Activated T-helper 2 cell treated with anti-CD3 and anti-CD28 coated beads, Interferon-gamma antibody, Interleukin-2, Interleukin-4, amounts not matched to agents 10 μg/mL and 5 μg/mL and 100 μg/mL, durations not matched to agents 14 hours and 24 hours and 36 hours (primary cell): ENCODE measurements at regions of chr10 and their contacts with region 1.

Region 1: DNA sequence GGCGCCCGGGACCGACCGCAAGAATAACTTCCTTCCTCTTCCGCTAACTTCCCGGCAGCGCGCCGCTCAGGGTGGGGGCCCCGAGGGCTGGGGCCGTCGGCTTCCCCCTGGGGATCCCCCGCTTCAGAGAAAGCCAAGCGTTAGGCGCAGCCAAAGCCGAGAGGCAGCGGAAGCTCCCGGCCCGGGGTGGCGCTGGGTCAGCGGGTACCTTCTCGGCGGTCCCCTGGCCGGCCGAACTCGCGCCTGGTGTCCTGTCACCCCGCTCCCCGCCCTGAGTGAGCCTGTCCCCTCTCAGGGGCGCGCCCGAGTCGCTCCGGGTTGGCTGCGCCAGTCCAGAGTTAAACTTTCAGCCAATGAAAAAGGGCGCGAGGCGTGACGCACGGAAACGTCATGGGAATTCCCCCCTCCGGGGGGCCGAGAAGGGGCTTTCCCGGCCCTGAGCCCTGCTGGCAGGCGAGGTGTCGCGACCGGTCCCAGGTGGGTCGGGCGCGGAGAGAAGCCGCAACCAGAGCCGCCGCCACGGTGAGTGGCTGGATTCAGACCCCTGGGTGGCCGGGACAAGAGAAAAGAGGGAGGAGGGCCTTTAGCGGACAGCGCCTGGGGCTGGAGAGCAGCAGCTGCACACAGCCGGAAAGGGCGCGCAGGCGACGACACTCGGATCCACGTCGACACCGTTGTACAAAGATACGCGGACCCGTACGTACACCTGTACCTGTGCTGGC is 1.3 kb upstream of the NFKB2 start:
- DNase-seq: peak; percentile 99
- H3K4me3 Mint-ChIP-seq: peak overlapping the region; percentile 91
- H3K27ac Mint-ChIP-seq: peak overlapping the region; percentile 99
- H3K4me1 Mint-ChIP-seq: peaks cover 35% of the 10 kb centered on the region
- H3K27me3 Mint-ChIP-seq: no peaks in the 10 kb centered on the region

Region 2: DNA sequence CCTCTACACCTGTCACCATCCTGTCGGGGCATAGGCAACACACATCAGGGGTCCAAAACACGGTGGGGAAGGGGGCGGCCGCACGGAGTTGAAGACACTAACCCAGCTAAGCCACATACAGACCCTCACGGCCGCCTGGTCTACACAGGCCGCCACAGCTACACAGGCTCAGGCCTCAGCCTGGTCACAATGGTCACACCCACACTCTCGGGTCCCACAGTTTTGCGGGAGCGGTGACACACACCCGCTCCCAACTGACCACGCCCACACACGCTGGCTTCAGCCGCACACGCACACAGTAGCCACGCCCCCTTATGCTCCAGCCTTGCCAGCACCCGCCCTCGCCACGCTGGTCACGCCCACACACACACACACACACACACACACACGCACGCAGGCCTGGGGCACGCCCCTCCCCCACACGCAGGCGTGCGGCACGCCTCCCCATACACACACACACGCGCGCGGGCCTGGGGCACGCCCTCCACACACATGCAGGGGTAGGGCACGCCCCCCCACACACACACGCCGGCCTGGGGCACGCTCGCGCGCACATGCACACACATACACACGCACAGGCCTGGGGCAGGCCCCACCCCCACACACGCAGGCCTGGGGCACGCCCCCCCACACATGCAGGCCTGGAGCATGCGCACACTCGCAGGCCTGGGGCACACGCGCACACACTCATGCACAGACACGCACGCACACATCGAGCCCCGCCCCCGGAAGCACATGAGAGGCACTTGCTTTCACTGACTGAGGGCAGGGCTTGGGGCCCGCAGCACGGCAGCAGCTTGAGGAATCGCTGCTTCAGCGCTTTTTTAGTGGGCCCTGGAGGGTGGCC is 563.7 kb before region 1 on chr10:
- intact Hi-C with region 1: loop called (anchors 10 kb)
- DNase-seq: peak; percentile 88
- H3K4me3 Mint-ChIP-seq: peak overlapping the region; percentile 71
- H3K27ac Mint-ChIP-seq: peak overlapping the region; percentile 92
- H3K4me1 Mint-ChIP-seq: peaks cover 48% of the 10 kb centered on the region
- H3K27me3 Mint-ChIP-seq: no peaks in the 10 kb centered on the region

Region 3: DNA sequence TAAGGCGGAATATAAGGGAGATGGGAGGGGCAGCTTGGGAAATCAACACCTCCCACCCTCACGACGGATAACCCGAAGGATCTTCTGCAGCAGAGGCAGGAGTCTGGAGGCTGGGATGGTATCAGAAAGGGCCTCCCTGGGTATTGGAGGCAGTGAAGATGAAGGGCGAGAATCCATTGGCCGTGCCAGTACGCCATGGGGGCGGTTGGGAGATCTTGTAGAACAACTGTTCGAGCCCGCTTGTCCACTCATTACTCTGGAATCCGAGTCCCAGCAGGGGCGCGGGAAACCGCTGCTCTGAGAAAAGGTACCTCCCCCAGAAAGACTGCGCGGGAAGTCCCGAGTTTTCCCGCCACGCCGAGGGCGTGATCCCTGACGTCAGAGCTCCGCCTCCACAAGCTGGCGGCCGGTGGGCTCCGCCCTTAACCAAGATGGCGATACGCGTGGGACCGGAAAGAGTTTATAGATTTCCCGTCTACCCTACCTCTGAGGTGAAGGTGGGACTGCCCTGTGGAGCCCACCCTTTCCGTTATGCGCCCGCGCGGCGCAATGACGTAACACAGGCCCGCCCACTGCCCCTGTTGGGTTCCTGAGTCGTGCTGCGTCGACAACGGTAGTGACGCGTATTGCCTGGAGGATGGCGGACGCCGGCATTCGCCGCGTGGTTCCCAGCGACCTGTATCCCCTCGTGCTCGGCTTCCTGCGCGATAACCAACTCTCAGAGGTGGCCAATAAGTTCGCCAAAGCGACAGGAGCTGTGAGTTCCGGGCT is 242.3 kb before region 1 on chr10 and contains the start of gene NOLC1:
- intact Hi-C with region 1: loop called (anchors 1 kb)
- DNase-seq: peak; percentile 100
- H3K4me3 Mint-ChIP-seq: peak within 1 kb of the TSS; percentile 97
- H3K27ac Mint-ChIP-seq: peak within 1 kb of the TSS; percentile 96
- H3K4me1 Mint-ChIP-seq: peaks cover 28% of the 10 kb centered on the region
- H3K27me3 Mint-ChIP-seq: no peaks in the 10 kb centered on the region
- total RNA-seq, gene NOLC1: 195 and 196 TPM in 2 replicates

Region 4: DNA sequence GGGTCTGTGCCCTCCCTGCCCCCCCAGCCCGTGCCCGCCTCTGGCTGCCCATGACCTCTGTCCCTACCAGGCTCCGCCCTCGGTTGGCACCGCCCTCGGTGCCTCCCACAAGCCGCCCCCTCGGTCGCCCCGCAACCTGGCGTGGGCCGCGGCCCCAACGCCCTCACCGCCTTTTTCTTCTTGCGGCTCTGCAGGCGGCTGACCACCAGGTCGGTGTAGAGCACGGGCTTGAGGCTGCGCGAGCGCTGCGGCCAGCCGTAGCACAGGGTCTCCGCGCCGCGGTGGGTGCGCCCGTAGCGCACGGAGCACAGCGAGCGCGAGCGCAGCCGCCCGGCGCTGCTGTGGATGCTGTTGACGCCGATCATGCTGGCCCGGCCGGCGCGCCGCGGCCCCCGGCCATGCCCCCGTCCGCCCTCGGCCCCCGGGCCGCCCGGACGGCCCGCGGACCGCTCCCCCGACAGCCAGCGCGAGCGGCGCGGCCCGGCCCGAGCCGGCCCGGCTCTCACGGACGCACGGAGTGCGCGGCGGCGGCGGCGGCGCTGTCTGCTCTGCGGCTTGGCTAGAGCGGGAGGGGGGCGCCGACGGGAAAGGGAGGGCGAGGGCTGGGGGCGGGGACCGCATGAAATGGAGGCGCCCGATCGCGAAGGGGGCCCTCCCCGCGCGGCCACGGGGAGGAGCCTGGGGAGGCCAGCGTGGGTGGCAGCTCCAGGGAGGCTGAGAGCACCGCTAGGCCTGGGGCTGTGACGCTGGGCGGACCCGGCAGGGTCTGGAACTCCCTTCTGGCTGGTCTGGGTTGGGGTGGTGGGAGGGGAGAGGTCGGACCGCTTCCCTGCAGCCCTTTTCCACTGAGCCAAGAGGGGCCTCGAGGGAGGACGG is 14.7 kb after region 1 on chr10:
- intact Hi-C with region 1: loop called (anchors 1 kb)
- DNase-seq: peak; percentile 46
- H3K4me3 Mint-ChIP-seq: peak overlapping the region; percentile 85
- H3K27ac Mint-ChIP-seq: peak overlapping the region; percentile 74
- H3K4me1 Mint-ChIP-seq: peaks cover 32% of the 10 kb centered on the region
- H3K27me3 Mint-ChIP-seq: peaks cover 24% of the 10 kb centered on the region

Region 5: GRCh38 chr10:102432162-102432950 is 38.1 kb after region 1 on chr10 and contains the start of gene CUEDC2:
- intact Hi-C with region 1: loop called (anchors 1 kb)
- DNase-seq: peak; percentile 96
- H3K4me3 Mint-ChIP-seq: peak within 1 kb of the TSS; percentile 92
- H3K27ac Mint-ChIP-seq: peak within 1 kb of the TSS; percentile 93
- H3K4me1 Mint-ChIP-seq: peaks cover 41% of the 10 kb centered on the region
- H3K27me3 Mint-ChIP-seq: no peaks in the 10 kb centered on the region
- total RNA-seq, gene CUEDC2: 60.7 and 67.5 TPM in 2 replicates

Region 6: DNA sequence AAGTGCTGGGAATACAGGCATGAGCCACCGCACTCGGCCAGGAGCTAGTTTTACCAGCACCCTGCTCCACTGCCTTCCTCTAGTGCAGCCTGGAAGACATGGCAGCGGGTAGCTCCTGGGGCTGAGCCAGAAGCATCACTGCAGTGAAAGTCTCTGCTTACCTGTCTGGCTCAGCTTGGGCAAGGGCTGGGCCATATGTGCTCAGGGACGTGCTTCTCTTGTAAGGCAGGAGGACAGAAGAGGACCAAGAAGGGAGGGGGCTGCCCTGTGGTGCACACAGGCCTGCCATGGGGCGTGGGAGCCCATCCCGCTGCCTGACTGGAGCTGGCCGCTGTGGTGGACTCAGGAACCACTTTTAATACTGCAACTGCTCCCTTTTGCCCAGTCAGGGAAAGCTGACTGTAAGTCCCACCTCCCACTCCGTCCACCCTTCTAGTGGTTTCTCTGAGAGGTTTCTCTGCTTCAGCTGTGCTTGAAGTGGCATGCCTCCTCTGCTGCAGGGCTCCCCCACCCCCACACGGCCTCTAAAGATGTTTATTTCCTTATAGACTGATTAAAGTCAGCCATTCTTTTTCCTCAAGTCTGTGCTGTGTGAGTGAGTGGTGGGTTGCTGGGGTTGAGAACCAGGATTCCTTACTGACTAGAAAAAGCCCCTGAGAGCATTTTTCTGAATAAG is 82.4 kb after region 1 on chr10:
- intact Hi-C with region 1: loop called (anchors 2 kb)
- DNase-seq: no peak
- H3K4me3 Mint-ChIP-seq: no peak overlapping the region
- H3K27ac Mint-ChIP-seq: no peak overlapping the region
- H3K4me1 Mint-ChIP-seq: peaks cover 12% of the 10 kb centered on the region
- H3K27me3 Mint-ChIP-seq: no peaks in the 10 kb centered on the region